B cell (primary cell): ENCODE measurements at regions of chr14 and their contacts with region 1.

Region 1: GRCh38 chr14:73728717-73729330 is 14.6 kb upstream of the PNMA1 start:
- DNase-seq: peak; percentile 86
- ATAC-seq: peak; percentile 94
- H3K4me3 ChIP-seq: no peak overlapping the region
- H3K4me3 Mint-ChIP-seq: no peak overlapping the region
- H3K27ac ChIP-seq: peak overlapping the region; percentile 28 to 56
- H3K27ac Mint-ChIP-seq: peak overlapping the region; percentile 59
- H3K4me1 ChIP-seq: peaks cover 3 to 8% of the 10 kb centered on the region in 2 donors
- H3K4me1 Mint-ChIP-seq: peaks cover 15% of the 10 kb centered on the region
- H3K27me3 ChIP-seq: no peaks in the 10 kb centered on the region
- H3K27me3 Mint-ChIP-seq: no peaks in the 10 kb centered on the region
- CTCF ChIP-seq: peak; percentile 92

Region 2: GRCh38 chr14:73741386-73741875 is 12.6 kb after region 1 on chr14:
- CTCF ChIA-PET with region 1: interaction called, 184 read pairs
- POLR2A ChIA-PET with region 1: no interaction called
- intact Hi-C with region 1: no loop called
- DNase-seq: peak; percentile 73
- ATAC-seq: peak; percentile 77
- H3K4me3 ChIP-seq: peak overlapping the region; percentile 10 to 55 (median 43)
- H3K4me3 Mint-ChIP-seq: peak overlapping the region; percentile 94
- H3K27ac ChIP-seq: peak overlapping the region; percentile 61 to 81
- H3K27ac Mint-ChIP-seq: peak overlapping the region; percentile 99
- H3K4me1 ChIP-seq: peaks cover 63 to 71% of the 10 kb centered on the region in 2 donors
- H3K4me1 Mint-ChIP-seq: peaks cover 74% of the 10 kb centered on the region
- H3K27me3 ChIP-seq: no peaks in the 10 kb centered on the region
- H3K27me3 Mint-ChIP-seq: no peaks in the 10 kb centered on the region
- CTCF ChIP-seq: no peak

Region 3: DNA sequence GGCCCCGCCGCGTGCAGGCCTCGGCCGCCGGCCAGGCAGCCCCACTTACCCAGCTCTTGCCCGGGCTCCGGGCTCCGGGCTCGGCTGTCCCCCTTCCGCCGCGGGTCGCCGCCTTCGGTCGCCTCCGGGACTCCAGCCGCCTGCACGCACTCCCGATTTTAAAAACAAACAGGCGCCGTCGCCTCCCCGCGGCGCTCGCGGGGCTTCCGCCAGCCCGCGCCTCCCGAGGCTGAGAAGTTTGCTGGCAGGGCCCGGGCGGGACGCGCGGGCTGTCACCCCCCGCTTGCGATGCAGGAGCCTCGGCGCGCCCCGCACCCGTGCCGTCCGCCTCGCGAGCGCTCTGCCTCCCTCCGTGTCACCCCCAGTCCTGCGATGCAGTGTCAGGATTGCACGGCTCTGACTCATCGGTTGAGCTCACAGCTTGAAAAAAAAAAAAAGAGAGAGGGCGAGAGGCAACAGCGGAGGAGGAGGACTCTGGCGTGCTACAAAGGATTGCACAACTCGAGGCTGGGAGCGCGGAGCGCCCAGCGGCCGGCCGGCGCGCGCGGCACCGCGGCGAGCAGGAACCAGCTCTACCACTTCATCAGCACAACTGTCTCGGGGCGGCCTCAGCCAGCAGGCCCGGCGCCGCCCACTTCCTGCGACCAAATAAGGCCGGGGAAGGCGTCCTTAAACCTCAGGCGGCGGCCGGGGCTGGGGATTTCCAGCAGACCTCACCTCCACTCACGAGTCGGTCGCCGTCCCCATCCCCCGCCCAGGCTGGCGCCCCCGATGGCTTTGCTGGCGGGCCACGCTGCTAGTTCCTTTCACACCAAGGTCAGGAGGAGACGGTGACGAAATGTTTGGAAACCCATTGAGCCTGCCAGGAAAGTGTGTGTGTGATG is 31.1 kb after region 1 on chr14:
- CTCF ChIA-PET with region 1: interaction called, 184 read pairs
- POLR2A ChIA-PET with region 1: interaction called, 14 read pairs
- intact Hi-C with region 1: loop called (anchors 2 kb)
- DNase-seq: peak; percentile 98
- ATAC-seq: peak; percentile 67
- H3K4me3 ChIP-seq: peak overlapping the region; percentile 32 to 90 (median 87)
- H3K4me3 Mint-ChIP-seq: peak overlapping the region; percentile 92
- H3K27ac ChIP-seq: peak overlapping the region; percentile 98
- H3K27ac Mint-ChIP-seq: peak overlapping the region; percentile 97
- H3K4me1 ChIP-seq: peaks cover 79 to 85% of the 10 kb centered on the region in 2 donors
- H3K4me1 Mint-ChIP-seq: peaks cover 84% of the 10 kb centered on the region
- H3K27me3 ChIP-seq: no peaks in the 10 kb centered on the region
- H3K27me3 Mint-ChIP-seq: no peaks in the 10 kb centered on the region
- CTCF ChIP-seq: peak; percentile 21

Region 4: DNA sequence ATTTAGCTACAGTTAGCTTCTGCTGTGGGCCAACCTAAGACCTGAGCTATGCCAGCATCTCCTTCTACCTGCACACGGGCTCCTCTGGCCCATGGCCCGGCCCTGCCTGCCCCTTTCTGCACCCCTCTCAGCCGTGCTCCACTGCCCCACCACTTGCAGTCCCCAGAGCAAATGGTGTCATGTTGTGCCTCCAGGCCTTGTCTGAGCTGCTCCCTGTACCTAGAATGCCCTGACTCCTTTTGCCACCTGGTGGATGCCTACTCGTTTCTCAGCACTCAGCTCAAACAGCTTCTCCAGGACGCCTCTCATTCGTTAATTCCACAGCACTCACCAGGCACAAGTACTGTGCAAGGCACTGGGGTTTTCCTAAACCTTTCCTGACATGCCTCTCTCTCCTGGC is 48.6 kb after region 1 on chr14:
- CTCF ChIA-PET with region 1: interaction called, 200 read pairs
- POLR2A ChIA-PET with region 1: interaction called, 4 read pairs
- intact Hi-C with region 1: loop called (anchors 1 kb)
- DNase-seq: peak; percentile 67
- ATAC-seq: peak; percentile 84
- H3K4me3 ChIP-seq: no peak overlapping the region
- H3K4me3 Mint-ChIP-seq: peak overlapping the region; percentile 18
- H3K27ac ChIP-seq: peak overlapping the region in 1 of 2 donors; percentile 35
- H3K27ac Mint-ChIP-seq: peak overlapping the region; percentile 80
- H3K4me1 ChIP-seq: peaks cover 60 to 67% of the 10 kb centered on the region in 2 donors
- H3K4me1 Mint-ChIP-seq: peaks cover 65% of the 10 kb centered on the region
- H3K27me3 ChIP-seq: no peaks in the 10 kb centered on the region
- H3K27me3 Mint-ChIP-seq: no peaks in the 10 kb centered on the region
- CTCF ChIP-seq: peak; percentile 47

Region 5: DNA sequence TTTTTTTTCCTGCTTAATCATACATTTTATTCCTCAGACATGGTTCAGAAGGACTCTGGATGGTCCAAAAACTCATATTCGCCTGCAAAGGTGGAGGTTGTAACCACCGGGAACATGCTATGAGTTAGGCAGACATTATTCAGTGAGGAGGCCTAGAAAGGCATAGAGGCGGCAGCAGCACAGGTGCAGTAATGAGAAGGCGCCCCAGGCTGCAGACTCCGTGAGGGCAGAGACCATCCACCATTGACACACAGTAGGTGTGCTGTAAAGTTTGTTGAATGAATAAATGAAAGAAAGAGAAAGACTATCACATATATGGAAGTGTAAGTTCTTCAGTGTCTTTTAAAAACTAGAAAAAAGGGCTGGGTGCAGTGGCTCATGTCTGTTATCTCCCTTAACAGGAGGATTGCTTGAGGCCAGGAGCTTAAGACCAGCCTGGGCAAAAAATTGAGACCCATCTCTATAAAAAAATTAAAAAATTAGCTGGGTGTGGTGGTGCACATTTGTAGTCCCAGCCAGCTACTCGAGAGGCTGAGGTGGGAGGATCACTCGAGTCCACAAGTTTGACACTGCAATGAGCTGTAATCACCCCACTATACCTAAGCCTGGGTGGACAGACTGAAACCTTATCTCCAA is 88.3 kb after region 1 on chr14:
- CTCF ChIA-PET with region 1: interaction called, 299 read pairs
- POLR2A ChIA-PET with region 1: no interaction called
- intact Hi-C with region 1: no loop called
- DNase-seq: no peak
- ATAC-seq: no peak
- H3K4me3 ChIP-seq: no peak overlapping the region
- H3K4me3 Mint-ChIP-seq: no peak overlapping the region
- H3K27ac ChIP-seq: no peak overlapping the region
- H3K27ac Mint-ChIP-seq: no peak overlapping the region
- H3K4me1 ChIP-seq: no peaks in the 10 kb centered on the region
- H3K4me1 Mint-ChIP-seq: peaks cover 6% of the 10 kb centered on the region
- H3K27me3 ChIP-seq: no peaks in the 10 kb centered on the region
- H3K27me3 Mint-ChIP-seq: no peaks in the 10 kb centered on the region
- CTCF ChIP-seq: no peak

Region 6: DNA sequence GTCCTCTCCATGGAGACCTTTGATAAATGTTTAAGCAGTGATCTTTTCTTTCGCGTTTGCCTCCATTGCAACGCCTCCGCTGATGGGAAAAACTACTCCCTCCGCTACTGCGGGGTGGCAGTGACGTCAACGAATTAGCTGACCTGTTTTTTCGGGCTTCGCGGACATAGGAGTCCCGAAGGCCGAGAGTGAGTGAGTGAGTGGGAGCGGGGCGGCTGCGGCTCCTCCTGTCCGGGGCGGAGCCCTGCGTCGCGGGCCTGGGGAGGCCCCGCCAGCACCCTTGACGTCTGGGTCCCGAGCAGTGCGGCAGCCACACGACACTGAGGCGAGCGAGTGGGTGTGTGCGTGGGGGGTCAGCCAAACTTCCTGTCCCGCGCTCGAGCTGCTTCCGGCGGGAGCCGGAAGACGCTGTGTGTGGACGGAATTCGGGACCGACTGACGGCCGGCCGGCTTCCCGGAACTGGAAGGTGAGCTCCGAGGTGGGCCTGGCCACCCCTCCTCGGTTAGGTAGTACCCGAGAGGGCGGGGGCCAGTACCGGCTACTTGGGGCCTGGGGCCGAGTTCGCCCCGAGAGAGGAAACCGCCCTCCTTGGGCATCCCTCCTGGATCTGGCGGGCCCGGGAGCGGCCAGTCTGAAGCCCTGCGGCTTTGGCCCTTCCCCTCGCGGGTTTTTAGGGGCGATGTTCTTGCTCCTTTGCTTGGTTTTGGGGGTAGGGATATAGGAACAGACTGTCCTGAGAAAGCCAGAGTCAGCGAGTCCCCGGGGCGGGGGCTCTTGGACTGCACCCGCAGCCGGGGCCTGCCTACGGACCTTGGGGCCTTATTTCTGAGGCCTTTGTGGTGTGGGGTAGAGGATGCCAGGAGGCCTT is 157.9 kb after region 1 on chr14 and contains the start of gene ZNF410:
- CTCF ChIA-PET with region 1: interaction called, 17 read pairs
- POLR2A ChIA-PET with region 1: interaction called, 3 read pairs
- intact Hi-C with region 1: no loop called
- DNase-seq: peak; percentile 93
- ATAC-seq: peak; percentile 99
- H3K4me3 ChIP-seq: peak within 1 kb of the TSS; percentile 64 to 97 (median 94)
- H3K4me3 Mint-ChIP-seq: peak within 1 kb of the TSS; percentile 99
- H3K27ac ChIP-seq: peak within 1 kb of the TSS; percentile 94 to 96
- H3K27ac Mint-ChIP-seq: peak within 1 kb of the TSS; percentile 98
- H3K4me1 ChIP-seq: peaks cover 18 to 20% of the 10 kb centered on the region in 2 donors
- H3K4me1 Mint-ChIP-seq: peaks cover 41% of the 10 kb centered on the region
- H3K27me3 ChIP-seq: no peaks in the 10 kb centered on the region
- H3K27me3 Mint-ChIP-seq: no peaks in the 10 kb centered on the region
- CTCF ChIP-seq: no peak
- total RNA-seq, gene ZNF410: 58.3 and 69.0 TPM in 2 replicates